ENCODE measurements at regions of chr7 and their contacts with region 1.

Region 1: DNA sequence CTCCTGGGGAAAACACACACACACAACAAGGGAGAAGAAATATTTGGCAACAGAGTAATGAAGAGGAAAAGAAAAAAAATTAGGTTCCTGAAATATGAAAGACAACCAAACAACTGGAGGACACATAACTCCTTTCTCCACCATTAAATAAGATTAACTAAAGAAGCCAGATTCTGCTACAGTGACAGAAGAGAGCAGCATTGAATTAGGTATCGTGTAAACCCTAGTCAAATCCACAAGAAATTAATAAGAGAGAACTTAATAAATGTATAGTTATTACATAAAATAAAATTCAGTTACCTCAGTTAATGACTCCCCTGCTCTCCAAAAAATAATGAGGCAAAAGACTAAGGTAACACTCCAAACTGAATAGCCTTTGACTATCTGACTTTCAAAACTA is 306.7 kb downstream of the CRPPA start:
- DNase-seq: peak; percentile 18
- H3K4me3 ChIP-seq: no peak overlapping the region
- H3K27ac ChIP-seq: no peak overlapping the region
- H3K4me1 ChIP-seq: no peaks in the 10 kb centered on the region
- H3K27me3 ChIP-seq: no peaks in the 10 kb centered on the region
- CTCF ChIP-seq: peak; percentile 44 to 57

Region 2: DNA sequence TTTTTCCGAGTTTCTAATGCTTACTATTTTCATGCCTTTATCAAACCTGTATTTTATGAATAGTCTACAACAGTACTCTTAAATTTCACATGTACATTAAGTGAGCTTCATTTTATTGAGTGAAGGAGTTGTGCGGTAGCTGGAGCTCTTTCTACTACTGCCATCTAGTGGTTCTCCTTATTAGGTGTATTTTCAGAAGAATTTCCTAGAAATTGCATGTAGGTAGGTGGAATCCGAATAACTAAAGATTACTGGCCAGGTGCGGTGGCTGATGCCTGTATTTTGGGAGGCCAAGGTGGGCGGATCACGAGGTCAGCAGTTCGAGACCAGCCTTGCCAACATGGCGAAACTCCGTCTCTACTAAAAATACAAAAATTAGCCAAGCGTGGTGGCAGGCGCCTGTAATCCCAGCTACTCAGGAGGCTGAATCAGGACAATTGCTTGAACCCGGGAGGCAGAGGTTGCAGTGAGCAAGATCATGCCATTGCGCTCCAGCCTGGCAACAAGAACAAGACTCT is 450.3 kb after region 1 on chr7:
- CTCF ChIA-PET with region 1: no interaction called
- dilution Hi-C with region 1: no loop called
- in situ Hi-C with region 1: loop called (anchors 5 to 10 kb)
- intact Hi-C with region 1: loop called (anchors 1 kb)
- DNase-seq: peak; percentile 39
- H3K4me3 ChIP-seq: no peak overlapping the region
- H3K27ac ChIP-seq: no peak overlapping the region
- H3K4me1 ChIP-seq: no peaks in the 10 kb centered on the region
- H3K27me3 ChIP-seq: no peaks in the 10 kb centered on the region
- CTCF ChIP-seq: peak; percentile 69 to 70

Measured in mammary epithelial cell (primary cell).